PC-9 (cell line): ENCODE measurements at regions of chr20 and their contacts with region 1.

Region 1: DNA sequence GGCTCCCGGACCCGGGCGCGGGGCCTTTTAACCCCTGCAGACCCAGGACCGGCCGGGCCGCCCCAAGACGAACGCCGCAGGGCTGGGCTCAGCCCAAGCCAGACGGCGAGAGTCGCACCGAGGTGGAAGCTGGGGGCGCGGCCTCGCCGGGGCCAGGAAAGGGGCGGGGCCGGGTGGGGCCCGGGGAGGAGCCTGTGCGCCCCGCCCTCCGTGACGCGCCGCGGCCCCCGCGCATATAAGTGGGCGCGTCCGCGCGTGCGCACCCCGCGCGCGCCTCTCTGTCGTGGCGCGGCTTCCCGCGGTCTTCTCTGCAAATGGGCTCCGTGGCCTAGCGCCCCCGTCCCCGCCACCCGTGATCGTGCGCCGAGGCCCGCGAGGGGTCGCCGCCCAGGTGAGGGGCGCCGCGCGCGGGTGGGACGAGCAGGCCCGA is at the start of gene PPDPF:
- DNase-seq: peak in 1 of 2 experiments; percentile 83
- H3K4me3 ChIP-seq: peak within 1 kb of the TSS; percentile 99
- H3K27ac ChIP-seq: no peak within 1 kb of the TSS
- H3K4me1 ChIP-seq: peaks cover 7% of the 10 kb centered on the region; the same call in 1 of the 2 replicates
- H3K27me3 ChIP-seq: no peaks in the 10 kb centered on the region
- CTCF ChIP-seq: no peak
- total RNA-seq, gene PPDPF: 243 and 253 TPM in 2 replicates

Region 2: DNA sequence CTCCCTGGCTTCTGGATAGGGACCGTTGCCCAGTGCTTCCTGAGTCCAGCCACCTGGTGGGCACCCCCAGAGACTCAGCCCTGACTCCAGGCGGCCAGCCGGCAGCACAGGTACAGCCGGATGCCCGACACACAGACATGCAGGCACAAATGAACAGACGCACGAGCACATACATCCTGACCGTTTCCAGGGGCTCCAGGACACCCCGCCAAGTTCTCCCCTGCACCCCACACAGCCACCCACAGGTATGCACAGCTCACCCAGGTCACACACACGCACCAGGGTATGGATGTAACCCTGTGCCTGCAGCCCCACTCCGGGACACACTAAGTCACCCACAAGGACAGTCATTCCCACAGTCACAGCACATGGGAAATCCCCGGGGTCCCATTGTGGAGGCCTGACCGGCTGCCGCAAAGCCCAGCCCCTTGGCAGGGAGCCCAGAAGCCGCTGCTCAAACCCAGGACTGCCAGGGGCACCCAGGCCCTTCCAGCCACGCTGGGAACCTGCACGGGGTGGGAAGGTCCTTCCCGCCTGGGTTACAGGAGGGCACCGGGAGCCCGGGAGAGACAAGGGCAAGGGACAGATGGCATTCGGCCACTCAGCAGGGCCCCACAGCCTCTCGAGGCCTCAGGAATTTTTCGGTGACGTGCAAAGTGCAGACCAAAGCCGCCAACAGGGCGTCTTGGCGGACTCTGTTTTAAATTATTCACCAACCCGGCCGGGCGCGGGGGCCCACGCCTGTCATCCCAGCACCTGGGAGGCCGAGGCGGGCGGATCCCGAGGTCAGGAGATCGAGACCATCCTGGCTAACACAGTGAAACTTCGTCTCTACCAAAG is 37.4 kb before region 1 on chr20:
- CTCF ChIA-PET with region 1: no interaction called
- POLR2A ChIA-PET with region 1: interaction called, 16 read pairs
- intact Hi-C with region 1: no loop called
- DNase-seq: peak in 1 of 2 experiments; percentile 57
- H3K4me3 ChIP-seq: no peak overlapping the region
- H3K27ac ChIP-seq: no peak overlapping the region
- H3K4me1 ChIP-seq: 0 out of 2 replicates have a peak, but pooled peaks cover 6% of the 10 kb centered on the region
- H3K27me3 ChIP-seq: peaks cover 37% of the 10 kb centered on the region; the same call in 1 of the 2 replicates
- CTCF ChIP-seq: no peak

Region 3: GRCh38 chr20:63553227-63553932 is 32.9 kb after region 1 on chr20:
- CTCF ChIA-PET with region 1: interaction called, 6 read pairs
- POLR2A ChIA-PET with region 1: interaction called, 11 read pairs
- intact Hi-C with region 1: loop called (anchors 2 kb)
- DNase-seq: peak; percentile 77 to 98
- H3K4me3 ChIP-seq: peak overlapping the region; percentile 81
- H3K27ac ChIP-seq: peak overlapping the region; percentile 79
- H3K4me1 ChIP-seq: peaks cover 15% of the 10 kb centered on the region
- H3K27me3 ChIP-seq: no peaks in the 10 kb centered on the region
- CTCF ChIP-seq: no peak

Region 4: DNA sequence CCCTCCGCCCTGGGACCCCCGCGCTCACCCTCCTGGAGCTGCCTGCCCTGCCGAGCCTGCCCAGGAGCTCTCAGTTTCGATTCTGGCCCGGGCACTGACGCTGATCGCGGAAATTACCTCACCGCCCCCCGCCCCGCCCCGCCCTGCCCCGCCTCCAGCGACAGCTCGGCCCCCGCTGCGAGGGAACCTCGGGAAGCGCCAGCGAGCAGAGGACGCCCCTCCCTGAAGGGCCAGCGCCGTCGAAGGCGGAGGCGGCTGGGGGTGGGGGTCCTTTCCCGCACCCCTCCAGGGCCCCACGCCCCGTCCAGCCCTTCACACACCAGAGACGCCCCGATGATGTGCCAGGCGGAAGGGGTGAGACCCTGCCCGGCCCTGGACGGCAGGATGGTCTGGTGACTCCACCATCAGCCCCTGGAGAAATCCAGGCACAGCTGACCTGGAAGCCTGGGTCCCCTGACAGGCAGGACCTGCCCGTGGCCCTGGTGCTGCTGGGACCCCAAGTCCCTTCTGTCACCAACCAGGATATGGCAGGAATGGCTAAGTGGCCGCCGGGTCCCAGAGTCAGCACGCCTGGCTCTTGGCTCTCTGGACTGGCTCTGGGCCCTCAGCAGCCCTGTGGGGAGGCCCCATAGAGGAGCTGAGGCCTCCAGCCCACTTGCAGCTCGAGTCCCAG is 53.8 kb after region 1 on chr20 and contains the start of gene HELZ2:
- CTCF ChIA-PET with region 1: no interaction called
- POLR2A ChIA-PET with region 1: no interaction called
- intact Hi-C with region 1: no loop called
- DNase-seq: peak in 1 of 2 experiments; percentile 67
- H3K4me3 ChIP-seq: peak within 1 kb of the TSS; percentile 60
- H3K27ac ChIP-seq: no peak within 1 kb of the TSS
- H3K4me1 ChIP-seq: peaks cover 11% of the 10 kb centered on the region
- H3K27me3 ChIP-seq: no peaks in the 10 kb centered on the region
- CTCF ChIP-seq: no peak
- total RNA-seq, gene HELZ2: 33.7 and 52.6 TPM in 2 replicates